Motor neuron (in vitro differentiated cells): ENCODE measurements at regions of chr15 and their contacts with region 1.

Region 1: DNA sequence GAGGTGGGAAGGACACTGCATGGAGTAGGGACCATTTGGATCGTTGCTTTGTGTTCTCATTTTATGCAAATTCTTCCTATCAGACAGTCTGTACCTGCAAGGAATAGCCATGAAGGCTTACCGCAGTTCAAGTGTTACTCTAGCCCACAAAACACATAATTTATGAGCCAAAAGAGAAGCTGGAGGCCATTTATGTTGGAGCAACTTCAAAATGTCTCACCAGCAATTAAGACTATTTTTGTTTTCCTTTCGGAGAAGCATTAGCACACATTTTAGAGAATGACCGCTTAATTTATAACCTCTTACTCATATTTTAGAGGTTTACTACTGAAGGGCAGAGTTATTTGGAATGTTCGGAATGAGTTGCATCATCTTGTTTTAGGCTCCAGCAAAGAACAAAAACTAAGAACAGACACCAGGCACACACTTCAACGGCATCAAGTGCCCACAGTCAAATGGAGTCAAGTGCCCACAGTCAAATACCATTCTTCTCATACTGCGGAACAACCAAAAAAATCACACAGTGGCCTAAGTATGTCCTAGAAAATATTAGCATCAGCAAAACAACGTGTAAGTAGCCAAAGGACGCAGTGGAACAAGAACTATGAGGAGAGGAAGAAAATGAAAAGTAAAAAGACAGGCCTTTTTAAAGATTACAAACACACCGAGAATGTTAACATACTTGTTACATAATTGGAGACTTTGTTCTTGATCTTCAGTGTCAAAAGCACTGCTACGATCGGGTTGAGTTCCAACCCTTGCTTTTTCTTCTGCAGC is 17.5 kb upstream of the GOLGA8J start:
- ATAC-seq: peak in 2 of 8 experiments; percentile 58 to 60
- H3K4me3 ChIP-seq: no peak overlapping the region
- H3K27ac ChIP-seq: no peak overlapping the region
- H3K4me1 ChIP-seq: no peaks in the 10 kb centered on the region

Region 2: GRCh38 chr15:29674661-29675533 is 390.3 kb before region 1 on chr15:
- in situ Hi-C with region 1: loop called in 1 of 9 experiments (anchors 25 kb)
- ATAC-seq: peak; percentile 63 to 95 (median 86)
- H3K4me3 ChIP-seq: peak overlapping the region; percentile 26 to 38 (median 30)
- H3K27ac ChIP-seq: no peak overlapping the region
- H3K4me1 ChIP-seq: peaks cover 19 to 20% of the 10 kb centered on the region in 2 donors

Region 3: GRCh38 chr15:29870495-29871151 is 194.6 kb before region 1 on chr15:
- in situ Hi-C with region 1: no loop called
- ATAC-seq: peak in 6 of 8 experiments; percentile 23 to 91 (median 84)
- H3K4me3 ChIP-seq: peak overlapping the region in 1 of 5 donors; percentile 12
- H3K27ac ChIP-seq: peak overlapping the region; percentile 4 to 62
- H3K4me1 ChIP-seq: peaks cover 27 to 60% of the 10 kb centered on the region in 2 donors

Region 4: DNA sequence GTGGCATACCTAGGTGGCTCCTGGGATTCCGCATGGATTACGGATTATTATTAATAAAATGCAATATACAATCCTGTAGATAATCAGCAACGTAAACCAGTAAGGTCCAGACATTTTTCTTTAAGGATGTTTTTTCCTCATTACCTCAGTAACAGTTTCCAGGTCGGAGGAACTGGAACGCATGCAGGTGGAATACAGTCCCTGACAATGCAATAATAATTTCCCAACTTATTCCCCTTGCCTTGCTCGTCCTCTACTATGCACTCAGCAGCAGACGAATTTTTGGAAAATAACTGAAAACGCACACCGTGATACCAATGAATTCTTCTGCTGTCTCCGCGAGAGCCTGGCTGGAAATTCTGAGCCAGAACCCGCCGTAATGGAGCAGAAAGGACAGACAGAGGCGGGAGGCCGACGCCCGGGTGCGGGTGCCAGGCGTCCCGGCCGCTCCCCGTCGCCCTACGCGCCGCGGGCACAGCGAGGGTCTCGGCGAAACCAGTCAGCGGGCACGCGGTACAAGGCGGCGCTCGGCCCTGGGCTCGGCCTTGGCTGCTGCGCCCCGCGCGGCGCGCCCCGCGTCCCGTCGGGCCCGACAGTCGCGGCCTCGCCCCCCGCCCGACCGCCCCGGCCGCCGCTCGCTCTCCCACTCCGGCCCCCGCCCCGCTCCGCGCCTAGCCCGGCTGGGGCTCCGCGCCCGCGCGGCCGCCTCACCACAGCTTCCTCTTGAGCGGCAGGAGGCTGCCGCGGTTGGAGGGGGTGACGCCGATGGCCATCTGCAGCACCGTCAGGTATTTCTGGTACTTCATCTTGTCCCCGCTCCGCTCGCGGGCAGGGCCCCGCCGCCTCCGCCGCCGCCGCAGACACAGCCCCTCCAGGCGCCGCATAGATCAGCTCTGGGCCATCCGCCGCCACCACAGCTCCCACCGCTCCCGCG is 97.0 kb before region 1 on chr15:
- in situ Hi-C with region 1: loop called in 1 of 9 experiments (anchors 25 kb)
- ATAC-seq: peak; percentile 52 to 91 (median 87)
- H3K4me3 ChIP-seq: peak overlapping the region; percentile 48 to 63 (median 55)
- H3K27ac ChIP-seq: peak overlapping the region; percentile 39 to 62
- H3K4me1 ChIP-seq: peaks cover 4 to 5% of the 10 kb centered on the region in 2 donors